ENCODE measurements at regions of chr19 and their contacts with region 1.

Region 1: DNA sequence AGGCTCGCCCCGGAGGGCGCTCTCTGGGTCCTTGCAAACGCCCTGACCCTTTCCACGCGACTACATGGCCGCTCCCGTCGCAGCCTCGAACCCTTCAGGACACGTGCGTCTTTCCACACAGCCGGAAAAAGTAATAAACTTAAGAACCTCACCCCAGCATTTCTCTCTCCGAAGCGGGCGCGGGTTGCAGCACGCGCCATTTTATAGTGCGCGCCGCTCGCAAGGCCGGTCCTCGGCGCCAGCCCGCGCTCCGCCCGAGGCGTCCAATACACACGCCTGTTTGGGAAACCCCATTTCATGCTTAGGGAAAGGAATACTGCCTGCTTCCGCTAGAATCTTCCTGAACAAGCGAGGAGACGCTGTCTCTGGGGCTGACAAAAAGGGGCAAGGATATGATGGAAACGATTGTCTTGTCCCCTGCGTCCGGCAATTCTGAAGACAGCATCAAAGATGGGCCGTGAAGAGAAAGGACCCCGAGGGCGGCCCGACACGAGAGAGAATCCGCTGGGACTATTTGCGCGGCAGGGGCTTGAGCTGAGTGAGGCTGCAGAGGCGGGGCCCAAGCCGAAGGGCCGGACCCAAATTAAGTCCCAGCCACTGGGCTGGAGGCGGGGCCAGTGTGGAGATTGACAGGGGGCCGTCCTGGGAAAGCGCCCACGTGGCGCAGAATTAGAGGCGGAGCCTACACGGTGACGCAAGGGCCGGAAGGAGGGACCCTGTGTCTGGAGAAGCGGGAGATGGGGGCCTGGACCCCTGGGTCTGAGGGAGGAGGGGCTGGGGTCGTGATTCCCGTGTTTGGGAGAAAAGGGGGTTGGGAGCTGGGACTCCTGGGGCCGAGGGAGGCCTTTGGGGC is 14.4 kb downstream of the ACP4 start:
- DNase-seq: peak; percentile 98 to 99 (median 98)
- H3K4me3 ChIP-seq: peak overlapping the region; percentile 66 to 70
- H3K4me3 Mint-ChIP-seq: peak overlapping the region; percentile 95 to 100 (median 100)
- H3K27ac ChIP-seq: peak overlapping the region; percentile 93
- H3K27ac Mint-ChIP-seq: peak overlapping the region; percentile 99 to 100 (median 100)
- H3K4me1 ChIP-seq: peaks cover 27% of the 10 kb centered on the region
- H3K4me1 Mint-ChIP-seq: peaks cover 24 to 50% (median 40%) of the 10 kb centered on the region in 4 donors
- H3K27me3 ChIP-seq: no peaks in the 10 kb centered on the region
- H3K27me3 Mint-ChIP-seq: no peaks in the 10 kb centered on the region

Region 2: DNA sequence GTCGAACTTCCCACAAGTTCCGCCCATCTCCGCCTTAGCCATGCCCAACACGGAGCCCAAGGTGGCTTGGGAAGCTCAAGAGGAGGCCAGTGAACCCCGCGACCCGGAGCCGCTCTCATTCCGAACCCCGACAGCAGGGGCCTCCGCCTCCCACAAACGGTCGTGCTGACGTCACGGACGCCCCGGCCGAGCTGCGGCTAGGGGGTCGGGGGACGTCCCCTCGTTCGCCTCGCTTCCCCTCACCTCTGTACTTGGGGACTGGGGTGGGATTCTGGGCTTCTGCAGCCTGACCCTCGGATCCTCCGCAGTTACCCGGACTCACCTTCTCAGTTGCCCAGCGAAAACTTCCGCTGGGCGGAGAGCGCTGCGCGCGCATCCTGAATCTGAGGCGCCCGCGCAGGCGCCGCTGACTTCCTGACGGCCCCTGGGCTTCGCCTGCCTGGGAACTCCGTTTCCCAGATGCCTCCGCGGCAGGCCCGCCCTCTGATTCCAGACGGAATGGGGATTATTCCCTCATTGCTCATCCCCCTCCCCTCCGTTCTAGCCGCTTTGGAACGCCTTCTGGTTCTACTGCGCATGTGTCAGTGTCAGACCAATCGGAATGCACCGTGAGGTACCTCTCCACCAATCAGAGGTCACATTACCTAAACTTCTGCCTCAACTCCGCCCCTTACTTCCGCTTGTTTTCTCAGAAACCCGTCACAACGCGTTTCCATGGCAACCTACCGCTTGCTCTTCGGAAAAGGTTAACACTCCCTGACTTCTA is 779.4 kb before region 1 on chr19 and contains the start of gene VRK3:
- CTCF ChIA-PET with region 1: no interaction called
- POLR2A ChIA-PET with region 1: no interaction called
- intact Hi-C with region 1: loop called (anchors 10 kb)
- DNase-seq: peak; percentile 98 to 100 (median 100)
- H3K4me3 ChIP-seq: peak within 1 kb of the TSS; percentile 53 to 98
- H3K4me3 Mint-ChIP-seq: peak within 1 kb of the TSS; percentile 96 to 99 (median 97)
- H3K27ac ChIP-seq: peak within 1 kb of the TSS; percentile 96
- H3K27ac Mint-ChIP-seq: peak within 1 kb of the TSS; percentile 98 to 100 (median 100)
- H3K4me1 ChIP-seq: peaks cover 33% of the 10 kb centered on the region
- H3K4me1 Mint-ChIP-seq: peaks cover 23 to 63% (median 41%) of the 10 kb centered on the region in 4 donors
- H3K27me3 ChIP-seq: no peaks in the 10 kb centered on the region
- H3K27me3 Mint-ChIP-seq: no peaks in the 10 kb centered on the region
- total RNA-seq, gene VRK3: 109 to 114 TPM

Region 3: GRCh38 chr19:50333035-50333736 is 471.5 kb before region 1 on chr19:
- CTCF ChIA-PET with region 1: no interaction called
- POLR2A ChIA-PET with region 1: interaction called, 6 read pairs
- intact Hi-C with region 1: loop called (anchors 1 kb)
- DNase-seq: peak in 4 of 5 donors; percentile 88 to 94 (median 92)
- H3K4me3 ChIP-seq: peak overlapping the region; percentile 67 to 76
- H3K4me3 Mint-ChIP-seq: peak overlapping the region; percentile 82 to 97 (median 92)
- H3K27ac ChIP-seq: peak overlapping the region; percentile 3
- H3K27ac Mint-ChIP-seq: peak overlapping the region; percentile 69 to 98 (median 95)
- H3K4me1 ChIP-seq: peaks cover 51% of the 10 kb centered on the region
- H3K4me1 Mint-ChIP-seq: peaks cover 28 to 62% (median 41%) of the 10 kb centered on the region in 4 donors
- H3K27me3 ChIP-seq: peaks cover 17% of the 10 kb centered on the region
- H3K27me3 Mint-ChIP-seq: peaks cover 14 to 38% of the 10 kb centered on the region in 2 donors

Region 4: DNA sequence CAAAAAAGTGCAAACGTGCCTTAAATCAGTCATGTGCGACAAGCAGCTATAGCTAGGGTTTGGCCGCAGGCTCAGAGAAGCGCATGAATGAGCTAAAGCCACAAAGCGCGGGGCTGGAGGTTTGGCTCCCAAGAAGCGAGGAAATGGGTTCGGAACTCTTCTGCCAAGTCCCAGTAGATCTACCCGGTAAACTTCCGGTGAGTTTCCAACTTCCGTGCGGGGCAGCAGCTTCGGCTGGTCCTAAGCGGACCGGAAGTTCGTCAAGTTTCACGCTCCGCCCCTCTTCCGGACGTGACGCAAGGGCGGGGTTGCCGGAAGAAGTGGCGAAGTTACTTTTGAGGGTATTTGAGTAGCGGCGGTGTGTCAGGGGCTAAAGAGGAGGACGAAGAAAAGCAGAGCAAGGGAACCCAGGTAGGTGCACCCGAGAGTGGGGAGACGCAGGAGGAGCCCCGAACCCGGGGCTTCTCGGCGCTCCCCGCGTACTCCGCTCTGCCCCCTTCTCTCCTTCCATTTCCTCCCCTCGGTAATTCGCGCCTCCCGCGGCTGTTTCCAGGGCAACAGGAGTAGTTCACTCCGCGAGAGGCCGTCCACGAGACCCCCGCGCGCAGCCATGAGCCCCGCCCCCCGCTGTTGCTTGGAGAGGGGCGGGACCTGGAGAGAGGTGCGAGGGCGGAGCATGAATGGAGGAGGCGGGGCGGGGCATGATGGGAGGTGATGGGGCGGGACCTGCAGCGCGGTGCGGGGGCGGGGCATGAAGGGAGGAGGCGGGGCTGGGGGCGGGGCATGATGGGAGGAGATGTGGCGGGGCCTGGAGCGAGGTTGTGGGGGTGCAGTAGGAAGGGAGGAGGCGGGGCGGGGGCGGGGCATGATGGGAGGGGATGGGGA is 428.2 kb before region 1 on chr19 and contains the start of gene NR1H2:
- CTCF ChIA-PET with region 1: no interaction called
- POLR2A ChIA-PET with region 1: interaction called, 6 read pairs
- intact Hi-C with region 1: loop called (anchors 1 kb)
- DNase-seq: peak; percentile 95 to 96 (median 96)
- H3K4me3 ChIP-seq: peak within 1 kb of the TSS; percentile 94 to 97
- H3K4me3 Mint-ChIP-seq: peak within 1 kb of the TSS; percentile 87 to 98 (median 96)
- H3K27ac ChIP-seq: peak within 1 kb of the TSS; percentile 100
- H3K27ac Mint-ChIP-seq: peak within 1 kb of the TSS; percentile 94 to 100 (median 100)
- H3K4me1 ChIP-seq: peaks cover 14% of the 10 kb centered on the region
- H3K4me1 Mint-ChIP-seq: peaks cover 7 to 26% (median 14%) of the 10 kb centered on the region in 4 donors
- H3K27me3 ChIP-seq: no peaks in the 10 kb centered on the region
- H3K27me3 Mint-ChIP-seq: no peaks in the 10 kb centered on the region
- total RNA-seq, gene NR1H2: 103 to 109 TPM

Region 5: DNA sequence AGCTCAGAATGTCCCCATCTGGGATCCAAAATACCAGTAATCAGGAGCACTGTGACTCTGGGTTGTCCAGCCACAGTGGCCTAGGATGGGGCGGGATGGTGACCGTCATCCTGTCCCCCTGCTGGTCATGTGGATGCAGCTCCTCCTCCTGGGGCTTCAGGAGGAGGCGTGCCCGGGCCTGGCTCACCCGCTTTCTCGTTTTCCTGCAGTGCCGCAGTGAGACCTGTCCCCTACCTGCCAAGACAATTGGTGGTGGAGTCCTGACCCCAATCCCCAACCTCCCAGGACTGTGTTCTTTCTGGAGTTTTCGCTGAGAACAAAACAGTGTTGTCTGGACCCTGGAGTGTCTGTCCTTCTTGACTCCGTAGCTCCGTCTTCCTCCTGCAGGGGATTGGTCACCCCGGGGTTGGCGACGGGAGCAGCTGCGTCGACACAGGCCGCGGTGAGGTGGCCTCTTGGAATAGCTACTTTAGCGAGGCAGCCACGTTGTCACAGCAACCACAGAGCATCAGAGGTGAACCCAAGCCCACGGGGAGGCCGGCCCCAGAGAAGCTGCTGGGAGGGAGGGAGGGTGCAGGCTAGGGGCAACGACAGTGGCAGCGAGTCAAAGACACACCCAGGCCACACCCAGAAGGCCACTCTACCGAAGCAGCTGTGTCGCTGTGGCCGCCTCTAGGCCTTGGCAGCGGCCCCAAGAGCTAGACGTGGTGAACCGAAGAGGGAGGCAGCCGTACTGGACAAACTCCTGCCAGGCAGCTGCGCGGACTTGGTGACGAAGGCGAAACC is 338.5 kb before region 1 on chr19:
- CTCF ChIA-PET with region 1: no interaction called
- POLR2A ChIA-PET with region 1: no interaction called
- intact Hi-C with region 1: no loop called
- DNase-seq: no peak
- H3K4me3 ChIP-seq: no peak overlapping the region
- H3K4me3 Mint-ChIP-seq: no peak overlapping the region
- H3K27ac ChIP-seq: no peak overlapping the region
- H3K27ac Mint-ChIP-seq: no peak overlapping the region
- H3K4me1 ChIP-seq: no peaks in the 10 kb centered on the region
- H3K4me1 Mint-ChIP-seq: peaks cover 3 to 4% (median 3%) of the 10 kb centered on the region in 4 donors
- H3K27me3 ChIP-seq: peaks cover 2% of the 10 kb centered on the region
- H3K27me3 Mint-ChIP-seq: peaks cover 5 to 8% of the 10 kb centered on the region in 2 donors

Region 6: DNA sequence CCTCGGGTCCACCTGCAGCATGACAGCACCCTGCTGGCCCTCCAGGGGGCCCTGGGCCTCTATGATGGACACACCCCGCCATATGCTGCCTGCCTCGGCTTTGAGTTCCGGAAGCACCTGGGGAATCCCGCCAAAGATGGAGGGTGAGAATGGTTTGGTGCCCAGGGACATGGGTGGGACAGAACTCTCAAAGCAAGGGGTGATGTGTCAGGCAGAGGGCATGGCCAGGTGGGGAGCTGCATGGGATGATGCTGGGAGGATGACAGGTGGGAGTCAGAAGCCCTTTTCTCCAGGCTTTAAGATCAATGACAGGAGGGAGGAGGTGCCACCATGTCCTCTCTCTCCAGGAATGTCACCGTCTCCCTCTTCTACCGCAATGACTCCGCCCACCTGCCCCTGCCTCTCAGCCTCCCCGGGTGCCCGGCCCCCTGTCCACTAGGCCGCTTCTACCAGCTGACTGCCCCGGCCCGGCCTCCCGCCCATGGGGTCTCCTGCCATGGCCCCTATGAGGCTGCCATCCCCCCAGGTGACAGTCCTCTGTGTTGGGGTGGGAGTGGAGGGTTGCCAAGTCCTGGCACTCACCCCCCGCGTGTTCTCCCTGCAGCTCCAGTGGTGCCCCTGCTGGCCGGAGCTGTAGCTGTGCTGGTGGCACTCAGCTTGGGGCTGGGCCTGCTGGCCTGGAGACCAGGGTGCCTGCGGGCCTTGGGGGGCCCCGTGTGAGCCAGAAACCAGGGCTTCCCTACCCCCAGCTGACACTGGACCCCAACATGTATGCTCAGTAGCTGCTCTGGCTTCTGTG is 10.0 kb before region 1 on chr19:
- CTCF ChIA-PET with region 1: no interaction called
- POLR2A ChIA-PET with region 1: interaction called, 14 read pairs
- intact Hi-C with region 1: no loop called
- DNase-seq: no peak
- H3K4me3 ChIP-seq: no peak overlapping the region
- H3K4me3 Mint-ChIP-seq: no peak overlapping the region
- H3K27ac ChIP-seq: no peak overlapping the region
- H3K27ac Mint-ChIP-seq: peak overlapping the region in 2 of 7 donors; percentile 46 to 59
- H3K4me1 ChIP-seq: peaks cover 5% of the 10 kb centered on the region
- H3K4me1 Mint-ChIP-seq: peaks cover 3 to 11% (median 7%) of the 10 kb centered on the region in 4 donors
- H3K27me3 ChIP-seq: no peaks in the 10 kb centered on the region
- H3K27me3 Mint-ChIP-seq: peaks cover 0 to 2% of the 10 kb centered on the region in 2 donors

Region 7: DNA sequence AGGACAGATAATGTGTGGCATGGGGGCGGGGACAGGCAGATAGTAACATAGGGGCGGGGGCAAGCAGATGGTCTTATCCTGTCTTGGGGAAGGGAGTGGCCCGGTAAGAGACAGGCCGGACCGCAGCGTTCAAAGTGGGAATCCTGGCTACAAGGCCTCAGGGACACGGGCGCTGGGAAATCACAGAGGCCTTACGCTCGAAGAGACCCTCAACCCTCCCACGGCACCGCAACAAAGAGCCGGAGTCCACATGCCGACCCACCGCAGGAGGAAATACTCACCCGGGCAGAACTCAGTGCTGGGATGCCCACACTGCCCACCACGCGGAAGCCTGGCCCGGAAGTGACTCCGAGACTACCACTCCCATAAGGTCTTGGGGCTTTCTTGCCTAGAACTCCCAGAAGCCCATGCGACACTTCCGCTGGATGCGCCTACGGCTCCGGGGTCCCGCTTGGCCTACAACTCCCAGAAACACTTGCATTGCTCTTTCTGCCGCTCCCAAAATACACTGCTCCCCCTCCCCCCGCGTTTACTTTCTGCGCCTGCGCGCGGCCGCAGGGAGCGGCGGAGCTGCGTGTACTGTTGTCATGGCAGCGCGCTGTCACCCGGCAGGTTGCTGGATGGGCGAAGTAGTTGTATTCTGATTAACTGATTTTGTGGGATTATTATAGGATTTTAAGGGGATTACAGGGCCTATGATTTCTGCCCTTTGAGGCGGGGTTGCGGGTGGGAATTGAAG is 303.6 kb after region 1 on chr19 and contains the start of gene CTU1:
- CTCF ChIA-PET with region 1: no interaction called
- POLR2A ChIA-PET with region 1: no interaction called
- intact Hi-C with region 1: loop called (anchors 1 kb)
- DNase-seq: peak; percentile 98 to 100 (median 99)
- H3K4me3 ChIP-seq: peak within 1 kb of the TSS; percentile 70 to 98
- H3K4me3 Mint-ChIP-seq: peak within 1 kb of the TSS; percentile 94 to 100 (median 97)
- H3K27ac ChIP-seq: peak within 1 kb of the TSS; percentile 69
- H3K27ac Mint-ChIP-seq: peak within 1 kb of the TSS; percentile 93 to 100 (median 99)
- H3K4me1 ChIP-seq: peaks cover 19% of the 10 kb centered on the region
- H3K4me1 Mint-ChIP-seq: peaks cover 22 to 44% (median 34%) of the 10 kb centered on the region in 4 donors
- H3K27me3 ChIP-seq: no peaks in the 10 kb centered on the region
- H3K27me3 Mint-ChIP-seq: no peaks in the 10 kb centered on the region
- total RNA-seq, gene CTU1: 11.4 TPM